ENCODE measurements at regions of chr18 and their contacts with region 1.

Region 1: DNA sequence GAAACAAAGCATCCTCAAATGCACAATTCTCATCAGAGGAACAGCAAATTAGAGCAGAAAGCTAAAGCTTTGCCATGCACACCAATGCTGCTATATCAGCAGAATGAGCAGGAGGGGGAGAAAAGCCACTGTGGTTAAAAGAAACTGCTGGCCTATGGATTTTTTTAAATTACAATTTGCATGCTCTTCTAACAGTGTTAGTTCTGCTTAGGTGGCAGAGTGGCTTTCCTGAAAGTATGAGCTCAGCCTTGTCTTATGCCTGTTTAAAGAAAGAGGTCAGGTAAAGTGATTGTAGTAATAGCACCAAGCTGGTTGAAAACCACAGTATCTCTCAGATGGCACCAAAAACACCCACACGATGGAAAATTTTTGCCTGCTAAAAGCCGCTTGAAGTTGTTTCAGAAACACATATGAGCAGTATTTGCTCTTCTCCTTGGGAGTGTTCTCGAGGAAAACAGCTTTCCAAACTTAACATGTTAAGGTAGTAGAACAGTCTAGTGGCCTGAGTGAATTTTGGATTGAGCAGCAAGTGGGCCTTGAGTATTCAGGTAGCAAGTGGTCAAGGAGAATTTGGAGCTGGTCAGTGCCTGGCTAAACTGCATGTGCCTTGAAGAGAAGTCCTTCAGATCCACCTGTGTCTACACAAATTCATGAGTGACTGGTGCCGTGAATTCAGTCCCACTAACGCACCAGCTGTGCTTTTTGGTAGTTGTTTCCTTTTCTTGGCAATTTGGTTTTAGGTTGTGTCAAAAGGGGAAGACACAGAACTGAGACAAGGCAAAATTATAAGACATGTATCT is 19.6 kb upstream of the NDUFV2 start:
- DNase-seq: peak in 5 of 9 experiments; percentile 16 to 62 (median 46)
- ATAC-seq: peak; percentile 90
- H3K4me3 ChIP-seq: no peak overlapping the region
- H3K4me3 Mint-ChIP-seq: peak overlapping the region; percentile 36
- H3K27ac ChIP-seq: peak overlapping the region; percentile 28 to 66
- H3K27ac Mint-ChIP-seq: peak overlapping the region; percentile 87
- H3K4me1 ChIP-seq: peaks cover 15% of the 10 kb centered on the region
- H3K4me1 Mint-ChIP-seq: peaks cover 23% of the 10 kb centered on the region
- H3K27me3 ChIP-seq: no peaks in the 10 kb centered on the region
- H3K27me3 Mint-ChIP-seq: no peaks in the 10 kb centered on the region
- CTCF ChIP-seq: no peak

Region 2: DNA sequence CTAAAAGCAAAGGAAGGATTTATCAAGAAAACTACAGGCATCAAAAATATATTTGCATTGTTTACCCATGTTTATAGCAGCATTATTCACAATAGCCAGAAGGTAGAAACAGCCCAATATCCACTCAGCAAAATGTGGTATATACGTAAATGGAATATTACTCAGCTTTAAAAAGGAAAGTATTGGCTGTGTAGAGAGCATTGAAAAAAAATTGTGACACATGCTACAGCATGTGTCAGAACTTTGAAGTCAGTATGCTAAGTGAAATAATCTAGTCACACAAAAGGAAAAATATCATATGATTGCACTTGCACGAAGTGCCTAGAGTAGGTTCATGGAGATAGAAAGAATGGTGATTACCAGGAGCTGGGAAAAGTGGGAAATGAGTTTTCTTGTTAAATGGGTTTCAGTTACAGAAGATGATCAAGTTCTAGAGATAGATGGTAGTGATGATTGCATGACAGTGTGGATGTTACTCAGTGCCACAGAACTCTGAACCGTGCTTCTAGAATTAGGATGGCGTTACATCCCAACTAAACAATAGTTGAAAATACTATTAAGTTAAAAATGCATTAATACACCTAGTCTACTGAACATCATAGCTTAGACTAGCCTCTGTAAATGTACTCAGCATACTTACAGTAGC is 73.8 kb after region 1 on chr18:
- CTCF ChIA-PET with region 1: no interaction called
- POLR2A ChIA-PET with region 1: no interaction called
- intact Hi-C with region 1: no loop called
- DNase-seq: no peak
- ATAC-seq: peak; percentile 22
- H3K4me3 ChIP-seq: no peak overlapping the region
- H3K4me3 Mint-ChIP-seq: no peak overlapping the region
- H3K27ac ChIP-seq: no peak overlapping the region
- H3K27ac Mint-ChIP-seq: no peak overlapping the region
- H3K4me1 ChIP-seq: peaks cover 59% of the 10 kb centered on the region
- H3K4me1 Mint-ChIP-seq: peaks cover 79% of the 10 kb centered on the region
- H3K27me3 ChIP-seq: no peaks in the 10 kb centered on the region
- H3K27me3 Mint-ChIP-seq: no peaks in the 10 kb centered on the region
- CTCF ChIP-seq: no peak

Region 3: GRCh38 chr18:9199681-9200080 is 116.8 kb after region 1 on chr18:
- CTCF ChIA-PET with region 1: no interaction called
- POLR2A ChIA-PET with region 1: no interaction called
- intact Hi-C with region 1: loop called in 1 of 2 experiments (anchors 5 kb)
- DNase-seq: no peak
- ATAC-seq: no peak
- H3K4me3 ChIP-seq: no peak overlapping the region
- H3K4me3 Mint-ChIP-seq: no peak overlapping the region
- H3K27ac ChIP-seq: no peak overlapping the region
- H3K27ac Mint-ChIP-seq: no peak overlapping the region
- H3K4me1 ChIP-seq: no peaks in the 10 kb centered on the region
- H3K4me1 Mint-ChIP-seq: peaks cover 26% of the 10 kb centered on the region
- H3K27me3 ChIP-seq: no peaks in the 10 kb centered on the region
- H3K27me3 Mint-ChIP-seq: no peaks in the 10 kb centered on the region
- CTCF ChIP-seq: no peak

Measured in CD8-positive, alpha-beta T cell (primary cell).